OCI-LY7 (cell line): ENCODE measurements at regions of chr22 and their contacts with region 1.

Region 1: GRCh38 chr22:49046546-49047361 is 780.9 kb downstream of the BRD1 start:
- DNase-seq: peak; percentile 70
- H3K4me3 ChIP-seq: no peak overlapping the region
- H3K27ac ChIP-seq: no peak overlapping the region
- H3K4me1 ChIP-seq: no peaks in the 10 kb centered on the region
- CTCF ChIP-seq: peak; percentile 77

Region 2: DNA sequence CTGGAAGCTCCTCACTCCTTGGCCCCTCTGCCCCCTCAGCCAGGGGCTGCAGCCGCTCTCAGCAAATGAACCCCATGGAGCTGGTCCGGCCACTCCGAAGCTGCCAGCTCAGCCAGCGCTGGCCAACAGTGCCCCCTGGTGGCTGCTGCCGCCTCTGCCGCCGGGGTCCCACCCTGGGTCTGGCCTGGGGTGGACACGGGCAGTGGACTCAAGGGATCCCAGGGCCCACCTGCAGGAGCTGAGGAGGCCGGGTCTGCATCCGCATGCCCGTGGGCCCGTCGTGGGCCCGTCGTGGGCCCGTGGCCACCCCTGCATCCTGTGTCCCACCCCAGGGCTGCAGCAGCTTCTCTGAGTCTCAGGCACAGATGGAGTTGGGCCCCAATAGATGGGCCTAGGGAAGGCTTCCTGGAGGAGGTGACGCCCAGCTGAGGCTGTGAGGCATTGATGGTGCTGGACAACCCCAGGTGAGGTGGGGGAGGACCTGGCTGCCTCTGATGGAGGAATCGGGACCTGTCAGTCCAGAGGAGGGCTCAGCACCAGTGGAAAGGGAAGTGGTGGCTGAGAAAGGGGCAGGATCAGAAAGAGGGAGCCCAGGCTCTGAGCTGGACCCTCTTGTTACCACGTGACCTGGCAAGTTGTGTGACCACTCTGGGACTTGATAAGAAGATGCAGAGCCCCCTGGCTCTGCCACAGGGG is 258.6 kb after region 1 on chr22:
- CTCF ChIA-PET with region 1: no interaction called
- POLR2A ChIA-PET with region 1: no interaction called
- intact Hi-C with region 1: loop called (anchors 1 kb)
- DNase-seq: peak; percentile 67
- H3K4me3 ChIP-seq: no peak overlapping the region
- H3K27ac ChIP-seq: no peak overlapping the region
- H3K4me1 ChIP-seq: peaks cover 31% of the 10 kb centered on the region
- CTCF ChIP-seq: peak; percentile 95